ENCODE measurements at regions of chr2 and their contacts with region 1.

Region 1: DNA sequence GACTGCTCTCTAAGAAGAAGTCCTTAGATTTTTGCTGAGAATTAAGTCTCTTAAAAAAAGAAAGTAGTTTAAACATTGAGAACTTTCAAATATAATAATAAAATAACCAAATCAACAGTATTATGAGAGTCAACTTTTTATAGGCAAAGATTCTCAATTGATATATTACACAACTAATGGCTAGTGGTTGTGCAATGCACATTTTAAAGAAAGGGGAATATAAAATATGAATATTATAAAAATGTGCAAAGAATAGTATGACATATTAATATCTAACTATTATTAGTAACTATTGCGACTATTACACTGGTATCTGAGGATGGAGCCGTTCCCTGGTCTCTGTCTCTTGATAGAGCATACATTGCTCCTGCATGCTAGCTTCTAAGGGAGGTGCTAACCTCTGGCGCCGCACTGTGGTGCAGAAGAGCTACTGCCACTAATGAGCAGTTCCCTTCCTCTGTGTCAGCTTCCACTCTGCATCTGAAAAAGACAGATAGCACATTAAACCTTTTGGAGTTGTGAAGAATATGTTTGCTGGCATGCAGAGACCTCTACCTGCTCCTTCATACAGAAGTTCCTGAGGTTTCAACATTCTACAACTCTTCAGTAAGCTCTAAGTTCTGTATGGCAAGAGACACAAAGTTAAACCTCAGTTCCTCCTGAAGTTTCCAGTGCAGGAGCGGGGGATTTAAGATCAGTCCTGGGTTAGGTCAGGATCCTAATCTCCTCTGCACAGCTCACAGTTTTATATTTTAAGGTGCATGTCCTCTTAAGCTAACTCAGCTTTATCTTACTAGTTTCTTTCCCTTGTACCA is 3.5 kb upstream of the SLC9A2 start:
- DNase-seq: peak; percentile 33 to 88 (median 66)

Region 2: GRCh38 chr2:102473020-102473419 is 142.8 kb before region 1 on chr2 and contains the start of gene SLC9A4:
- intact Hi-C with region 1: loop called (anchors 5 kb)
- DNase-seq: peak in 41 of 42 donors; percentile 5 to 77 (median 53)